ENCODE measurements at regions of chr10 and their contacts with region 1.

Region 1: DNA sequence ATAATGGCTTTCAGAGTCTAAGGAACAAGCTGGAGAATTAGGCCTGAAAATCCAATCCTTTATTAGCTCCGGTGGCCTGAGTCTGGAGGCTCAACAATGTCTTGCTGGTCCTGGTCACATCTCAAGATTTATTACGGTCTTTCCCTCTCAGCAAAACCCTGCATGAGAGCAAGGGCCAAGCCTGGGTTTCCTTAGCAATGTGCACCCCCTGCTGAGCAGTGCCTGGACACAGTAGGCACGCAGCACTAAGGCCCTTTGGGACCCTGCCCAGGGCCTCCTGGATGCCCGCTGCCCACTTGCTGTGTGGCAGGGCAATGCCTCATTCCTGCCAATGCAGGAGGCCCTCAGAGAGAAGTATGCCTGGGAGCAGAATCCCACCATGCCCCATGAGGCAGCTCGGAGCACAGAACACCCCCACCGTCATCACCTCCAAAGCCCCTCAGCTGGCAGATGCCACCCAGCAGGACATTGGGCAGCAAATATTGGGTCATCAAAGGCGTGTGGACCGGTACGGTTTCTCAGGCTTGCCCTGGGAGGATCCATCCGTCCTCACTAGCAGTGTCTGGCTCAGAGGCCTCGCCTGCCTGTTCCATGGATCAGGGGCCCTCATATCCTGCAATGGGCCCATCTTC is 156.4 kb downstream of the OAT start:
- DNase-seq: peak in 1 of 10 donors; percentile 43
- H3K4me3 ChIP-seq: no peak overlapping the region
- H3K27ac ChIP-seq: no peak overlapping the region
- H3K27me3 ChIP-seq: no peaks in the 10 kb centered on the region
- CTCF ChIP-seq: peak in 6 of 56 donors; percentile 9 to 25 (median 16)

Region 2: GRCh38 chr10:123994417-123995081 is 267.8 kb before region 1 on chr10:
- intact Hi-C with region 1: loop called in 1 of 2 experiments (anchors 5 kb)
- DNase-seq: peak; percentile 72 to 91 (median 82)
- H3K4me3 ChIP-seq: peak overlapping the region in 54 of 59 donors; percentile 0 to 55 (median 32)
- H3K27ac ChIP-seq: no peak overlapping the region
- H3K27me3 ChIP-seq: peaks cover 0 to 55% (median 25%) of the 10 kb centered on the region in 45 donors
- CTCF ChIP-seq: peak; percentile 98 to 100 (median 100)

Region 3: GRCh38 chr10:124249812-124250432 is 12.4 kb before region 1 on chr10:
- intact Hi-C with region 1: no loop called
- DNase-seq: no peak
- H3K4me3 ChIP-seq: no peak overlapping the region
- H3K27ac ChIP-seq: no peak overlapping the region
- H3K27me3 ChIP-seq: no peaks in the 10 kb centered on the region
- CTCF ChIP-seq: peak in 1 of 56 donors; percentile 21

Region 4: DNA sequence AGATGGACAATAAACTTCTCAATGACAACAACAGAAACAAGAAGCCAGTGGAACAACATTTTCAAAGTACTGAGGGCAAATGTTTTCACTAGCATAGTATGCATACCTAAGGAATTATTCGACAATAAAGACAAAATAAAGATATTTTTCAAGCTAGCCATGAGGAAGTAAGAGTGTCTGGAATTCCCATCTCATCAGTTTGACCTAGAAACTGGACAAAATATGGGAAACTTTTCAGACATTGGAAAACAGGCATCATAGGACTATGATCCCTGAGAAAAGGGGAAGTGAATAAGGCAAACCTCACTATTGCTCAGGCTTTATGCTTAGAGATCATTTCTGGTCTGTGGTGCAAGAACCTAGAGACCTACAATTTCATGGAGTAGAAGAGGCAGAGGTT is 70.1 kb after region 1 on chr10:
- intact Hi-C with region 1: no loop called
- DNase-seq: no peak
- H3K4me3 ChIP-seq: no peak overlapping the region
- H3K27ac ChIP-seq: no peak overlapping the region
- H3K27me3 ChIP-seq: no peaks in the 10 kb centered on the region
- CTCF ChIP-seq: no peak